ENCODE measurements at regions of chr13 and their contacts with region 1.

Region 1: DNA sequence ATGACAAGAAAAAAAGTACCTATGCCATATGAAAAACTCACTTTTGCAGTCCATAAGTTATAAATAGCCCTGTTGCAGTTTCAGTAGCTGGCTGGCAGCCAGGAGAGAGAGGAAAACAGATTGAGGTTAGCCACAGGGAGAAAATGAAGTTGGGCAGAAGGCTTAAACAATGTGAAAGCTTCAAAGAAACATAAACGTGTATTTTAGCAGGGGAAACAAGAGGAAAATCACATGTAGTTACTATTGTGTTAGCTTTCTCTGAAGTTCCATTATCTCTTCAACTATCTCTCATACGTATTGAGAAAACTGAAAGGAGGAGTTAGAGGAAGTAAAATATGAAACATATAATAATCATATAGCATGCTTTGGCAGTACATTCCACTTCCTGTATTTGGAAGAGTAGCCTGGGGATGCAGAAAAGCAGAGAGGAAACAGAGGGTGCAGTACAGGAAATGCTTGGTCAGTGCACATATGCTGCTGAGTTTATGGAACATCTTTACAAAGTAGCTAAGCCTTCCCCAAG is 1551.1 kb downstream of the EFNB2 start:
- DNase-seq: peak; percentile 63
- ATAC-seq: peak; percentile 83

Region 2: GRCh38 chr13:105297839-105298238 is 313.5 kb after region 1 on chr13:
- intact Hi-C with region 1: no loop called
- DNase-seq: no peak
- ATAC-seq: no peak

Region 3: DNA sequence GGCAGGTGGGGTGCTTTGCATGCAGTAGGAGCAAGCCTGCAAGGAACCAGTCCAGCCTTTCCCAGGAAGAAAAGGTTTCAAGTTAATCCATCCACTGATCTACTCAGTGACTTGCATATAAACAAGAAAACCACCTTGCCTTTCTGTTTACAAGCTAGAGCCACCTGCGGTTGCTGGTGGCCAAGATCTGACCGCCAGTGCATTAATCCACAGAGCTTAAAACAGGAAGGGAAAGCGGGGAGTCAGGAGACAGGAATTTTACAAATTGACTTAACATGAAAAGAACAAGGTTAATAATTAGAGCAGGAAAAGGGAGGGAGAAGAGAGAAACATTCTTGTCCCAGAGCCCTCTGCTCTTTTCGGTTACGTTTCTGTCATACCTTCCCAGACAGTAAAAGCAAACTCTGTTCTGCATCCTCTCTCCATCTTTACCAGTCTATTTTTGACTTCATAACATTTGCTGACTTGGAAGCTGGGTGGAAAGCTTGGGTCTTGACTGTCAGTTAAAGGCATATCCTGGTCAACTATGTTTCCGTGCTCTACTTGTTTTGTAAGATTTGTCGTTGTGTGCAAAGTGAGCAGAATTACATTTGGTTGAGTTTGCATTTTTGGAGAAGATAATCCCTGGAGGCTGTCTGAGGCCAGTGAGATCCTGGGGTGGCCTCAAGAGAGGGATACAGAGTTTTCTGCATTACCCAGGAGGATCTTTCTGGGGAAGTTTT is 790.5 kb after region 1 on chr13:
- intact Hi-C with region 1: loop called (anchors 5 kb)
- DNase-seq: no peak
- ATAC-seq: no peak

Measured in sciatic nerve (tissue), 2 donors.